Panc1 (cell line): ENCODE measurements at regions of chrX and their contacts with region 1.

Region 1: DNA sequence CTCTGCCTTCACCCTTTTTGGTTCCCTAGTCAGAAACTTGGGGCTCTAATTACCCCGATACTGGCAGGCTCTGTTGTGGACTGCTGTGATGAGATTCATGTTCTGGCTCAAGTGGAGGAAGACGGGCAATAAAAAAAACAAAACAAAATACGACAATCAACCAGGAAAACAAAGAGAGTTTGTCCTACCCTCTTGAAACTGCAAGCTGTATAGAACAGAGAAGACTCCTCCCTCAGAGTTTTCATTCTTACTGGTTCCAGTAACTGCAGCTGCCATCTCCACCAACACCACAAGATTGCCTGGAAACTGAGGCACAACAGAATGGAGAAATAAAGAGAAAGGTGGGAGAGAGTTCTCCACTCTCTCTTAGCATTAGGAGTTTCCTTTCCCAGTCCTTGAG is 11.1 kb upstream of the IL1RAPL1 start:
- DNase-seq: no peak
- ATAC-seq: no peak
- H3K4me3 ChIP-seq: no peak overlapping the region
- H3K27ac ChIP-seq: no peak overlapping the region
- H3K4me1 ChIP-seq: no peaks in the 10 kb centered on the region
- H3K27me3 ChIP-seq: no peaks in the 10 kb centered on the region
- CTCF ChIP-seq: no peak

Region 2: DNA sequence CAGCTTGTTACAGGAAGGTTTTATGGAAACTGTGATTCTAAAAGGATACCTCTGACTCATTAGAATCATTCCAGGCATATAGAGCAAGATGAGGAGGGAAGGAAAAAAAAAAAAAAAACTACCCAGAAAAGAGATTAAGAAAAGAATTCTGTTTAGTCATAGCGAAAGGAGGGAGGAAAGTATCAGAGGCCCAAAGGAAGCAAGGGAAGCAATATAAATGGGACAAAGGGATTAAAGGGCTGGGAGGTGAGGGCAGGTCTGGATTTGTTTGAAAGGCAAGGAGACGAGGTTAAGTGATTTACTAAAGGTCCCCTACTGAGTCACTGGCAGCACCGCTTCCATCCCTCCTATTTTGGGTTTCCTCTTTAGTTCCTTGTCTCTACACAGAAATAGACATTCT is 77.5 kb before region 1 on chrX:
- CTCF ChIA-PET with region 1: no interaction called
- POLR2A ChIA-PET with region 1: interaction called, 10 read pairs
- in situ Hi-C with region 1: no loop called
- intact Hi-C with region 1: no loop called
- DNase-seq: no peak
- ATAC-seq: no peak
- H3K4me3 ChIP-seq: no peak overlapping the region
- H3K27ac ChIP-seq: no peak overlapping the region
- H3K4me1 ChIP-seq: no peaks in the 10 kb centered on the region
- H3K27me3 ChIP-seq: no peaks in the 10 kb centered on the region
- CTCF ChIP-seq: no peak

Region 3: GRCh38 chrX:28542791-28543190 is 33.3 kb before region 1 on chrX:
- CTCF ChIA-PET with region 1: no interaction called
- POLR2A ChIA-PET with region 1: no interaction called
- in situ Hi-C with region 1: no loop called
- intact Hi-C with region 1: no loop called
- DNase-seq: no peak
- ATAC-seq: no peak
- H3K4me3 ChIP-seq: no peak overlapping the region
- H3K27ac ChIP-seq: no peak overlapping the region
- H3K4me1 ChIP-seq: no peaks in the 10 kb centered on the region
- H3K27me3 ChIP-seq: no peaks in the 10 kb centered on the region
- CTCF ChIP-seq: no peak

Region 4: DNA sequence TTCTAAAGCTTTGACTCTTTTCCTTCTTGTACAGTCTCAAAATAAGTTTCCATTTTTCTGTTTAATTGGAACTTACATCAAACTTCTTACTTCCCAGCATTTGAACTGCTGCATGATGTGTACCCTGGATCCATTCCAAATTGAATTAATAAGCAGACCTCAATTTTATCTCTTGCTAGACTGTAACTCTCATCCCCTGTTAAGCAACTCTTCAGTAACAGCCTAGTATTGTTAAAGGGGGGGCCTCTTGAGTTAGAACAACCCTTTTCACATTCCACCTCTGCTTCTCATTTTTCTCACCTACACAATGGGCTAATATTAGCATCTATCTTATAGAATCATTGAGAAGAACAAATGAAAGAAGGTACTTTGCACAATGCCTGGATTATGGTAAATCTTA is 180.5 kb after region 1 on chrX:
- CTCF ChIA-PET with region 1: no interaction called
- POLR2A ChIA-PET with region 1: no interaction called
- in situ Hi-C with region 1: no loop called
- intact Hi-C with region 1: no loop called
- DNase-seq: no peak
- ATAC-seq: no peak
- H3K4me3 ChIP-seq: no peak overlapping the region
- H3K27ac ChIP-seq: no peak overlapping the region
- H3K4me1 ChIP-seq: no peaks in the 10 kb centered on the region
- H3K27me3 ChIP-seq: no peaks in the 10 kb centered on the region
- CTCF ChIP-seq: no peak

Region 5: DNA sequence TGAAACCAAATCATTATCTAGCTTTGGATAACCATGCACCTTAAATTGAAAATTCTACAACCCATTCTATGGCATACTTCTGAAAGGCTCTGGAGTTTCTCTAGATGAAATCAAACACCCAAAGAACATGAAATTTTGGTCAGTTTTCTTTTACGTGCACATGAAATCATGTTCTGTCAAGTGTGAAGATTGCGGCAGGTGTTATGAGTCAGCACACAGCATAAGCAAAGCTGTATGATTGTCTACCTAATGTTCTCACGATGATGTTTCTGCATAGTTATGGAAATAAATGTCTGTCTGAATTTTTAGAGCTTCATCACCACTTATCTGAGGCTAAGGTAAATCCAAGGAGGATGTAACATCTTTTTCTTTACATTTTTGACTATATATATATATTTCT is 506.4 kb after region 1 on chrX:
- CTCF ChIA-PET with region 1: no interaction called
- POLR2A ChIA-PET with region 1: no interaction called
- in situ Hi-C with region 1: no loop called
- intact Hi-C with region 1: no loop called
- DNase-seq: no peak
- ATAC-seq: no peak
- H3K4me3 ChIP-seq: no peak overlapping the region
- H3K27ac ChIP-seq: no peak overlapping the region
- H3K4me1 ChIP-seq: no peaks in the 10 kb centered on the region
- H3K27me3 ChIP-seq: no peaks in the 10 kb centered on the region
- CTCF ChIP-seq: no peak